CD4-positive, alpha-beta T cell (primary cell): ENCODE measurements at regions of chr9 and their contacts with region 1.

Region 1: GRCh38 chr9:97900738-97901565 is 21.3 kb downstream of the TRMO start:
- DNase-seq: peak in 4 of 14 experiments; percentile 57 to 79 (median 70)
- ATAC-seq: no peak
- H3K4me3 ChIP-seq: no peak overlapping the region
- H3K4me3 Mint-ChIP-seq: peak overlapping the region; percentile 22
- H3K27ac ChIP-seq: peak overlapping the region in 1 of 2 donors; percentile 7
- H3K27ac Mint-ChIP-seq: peak overlapping the region; percentile 96
- H3K4me1 ChIP-seq: peaks cover 54% of the 10 kb centered on the region
- H3K4me1 Mint-ChIP-seq: peaks cover 71% of the 10 kb centered on the region
- H3K27me3 ChIP-seq: no peaks in the 10 kb centered on the region
- H3K27me3 Mint-ChIP-seq: no peaks in the 10 kb centered on the region
- CTCF ChIP-seq: peak; percentile 81

Region 2: DNA sequence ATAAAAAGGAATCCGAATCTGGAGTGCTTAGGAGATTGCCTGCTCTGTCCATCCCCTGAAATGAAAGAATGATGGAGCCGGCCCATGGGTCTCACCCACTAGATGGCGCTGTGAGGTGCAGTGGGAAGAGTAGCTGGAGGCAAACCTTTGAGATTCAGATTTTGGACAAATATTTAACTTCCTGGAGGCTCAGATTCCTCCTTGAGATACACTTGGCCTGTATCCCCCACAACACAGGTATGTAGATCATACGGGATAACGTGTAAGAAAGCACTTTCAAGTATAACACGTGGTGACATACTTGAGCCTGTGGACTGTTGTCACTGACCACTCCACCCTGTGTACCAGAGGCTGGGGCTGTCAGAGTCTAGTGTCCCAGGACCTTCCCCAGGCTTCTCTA is 10.9 kb before region 1 on chr9:
- CTCF ChIA-PET with region 1: interaction called, 78 read pairs
- POLR2A ChIA-PET with region 1: interaction called, 10 read pairs
- intact Hi-C with region 1: loop called in 1 of 2 experiments (anchors 2 kb)
- DNase-seq: peak; percentile 53 to 82 (median 64)
- ATAC-seq: peak; percentile 74
- H3K4me3 ChIP-seq: no peak overlapping the region
- H3K4me3 Mint-ChIP-seq: no peak overlapping the region
- H3K27ac ChIP-seq: no peak overlapping the region
- H3K27ac Mint-ChIP-seq: peak overlapping the region; percentile 50
- H3K4me1 ChIP-seq: peaks cover 10% of the 10 kb centered on the region
- H3K4me1 Mint-ChIP-seq: peaks cover 12% of the 10 kb centered on the region
- H3K27me3 ChIP-seq: no peaks in the 10 kb centered on the region
- H3K27me3 Mint-ChIP-seq: no peaks in the 10 kb centered on the region
- CTCF ChIP-seq: peak; percentile 86

Region 3: GRCh38 chr9:98263482-98264357 is 362.8 kb after region 1 on chr9:
- CTCF ChIA-PET with region 1: interaction called, 3 read pairs
- POLR2A ChIA-PET with region 1: no interaction called
- intact Hi-C with region 1: loop called (anchors 5 kb)
- DNase-seq: peak; percentile 73 to 90 (median 82)
- ATAC-seq: peak; percentile 100
- H3K4me3 ChIP-seq: no peak overlapping the region
- H3K4me3 Mint-ChIP-seq: no peak overlapping the region
- H3K27ac ChIP-seq: no peak overlapping the region
- H3K27ac Mint-ChIP-seq: no peak overlapping the region
- H3K4me1 ChIP-seq: no peaks in the 10 kb centered on the region
- H3K4me1 Mint-ChIP-seq: no peaks in the 10 kb centered on the region
- H3K27me3 ChIP-seq: no peaks in the 10 kb centered on the region
- H3K27me3 Mint-ChIP-seq: peaks cover 9% of the 10 kb centered on the region
- CTCF ChIP-seq: peak; percentile 97